ENCODE measurements at regions of chr7 and their contacts with region 1.

Region 1: DNA sequence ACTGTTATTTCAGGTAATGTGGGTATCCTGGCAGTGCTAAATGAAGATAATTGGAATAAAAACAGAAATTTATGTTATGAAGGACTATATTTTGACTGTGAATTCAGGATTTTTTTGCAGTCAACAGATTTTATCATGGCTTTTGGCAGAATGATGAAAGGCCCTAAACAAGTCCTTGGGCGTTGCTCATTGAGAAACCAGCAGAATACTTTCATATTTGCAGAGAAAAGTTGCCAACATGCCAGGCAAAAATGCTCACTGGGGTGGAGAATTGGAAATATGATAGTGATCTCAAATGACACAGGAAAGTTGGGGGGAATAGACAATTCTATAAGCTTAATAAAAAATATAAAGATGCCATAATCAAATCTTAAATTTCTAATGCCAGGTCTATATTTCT is 121.1 kb downstream of the GPR85 start:
- DNase-seq: no peak
- ATAC-seq: no peak
- H3K4me3 ChIP-seq: no peak overlapping the region
- H3K4me3 Mint-ChIP-seq: no peak overlapping the region
- H3K27ac ChIP-seq: no peak overlapping the region
- H3K27ac Mint-ChIP-seq: no peak overlapping the region
- H3K4me1 ChIP-seq: no peaks in the 10 kb centered on the region
- H3K4me1 Mint-ChIP-seq: no peaks in the 10 kb centered on the region
- H3K27me3 ChIP-seq: no peaks in the 10 kb centered on the region
- H3K27me3 Mint-ChIP-seq: peaks cover 2 to 46% (median 30%) of the 10 kb centered on the region in 5 donors

Region 2: GRCh38 chr7:112873831-112874553 is 91.5 kb before region 1 on chr7:
- CTCF ChIA-PET with region 1: no interaction called
- POLR2A ChIA-PET with region 1: no interaction called
- intact Hi-C with region 1: no loop called
- DNase-seq: no peak
- ATAC-seq: no peak
- H3K4me3 ChIP-seq: no peak overlapping the region
- H3K4me3 Mint-ChIP-seq: no peak overlapping the region
- H3K27ac ChIP-seq: no peak overlapping the region
- H3K27ac Mint-ChIP-seq: no peak overlapping the region
- H3K4me1 ChIP-seq: no peaks in the 10 kb centered on the region
- H3K4me1 Mint-ChIP-seq: peaks cover 0 to 58% (median 46%) of the 10 kb centered on the region in 7 donors
- H3K27me3 ChIP-seq: no peaks in the 10 kb centered on the region
- H3K27me3 Mint-ChIP-seq: no peaks in the 10 kb centered on the region

Region 3: DNA sequence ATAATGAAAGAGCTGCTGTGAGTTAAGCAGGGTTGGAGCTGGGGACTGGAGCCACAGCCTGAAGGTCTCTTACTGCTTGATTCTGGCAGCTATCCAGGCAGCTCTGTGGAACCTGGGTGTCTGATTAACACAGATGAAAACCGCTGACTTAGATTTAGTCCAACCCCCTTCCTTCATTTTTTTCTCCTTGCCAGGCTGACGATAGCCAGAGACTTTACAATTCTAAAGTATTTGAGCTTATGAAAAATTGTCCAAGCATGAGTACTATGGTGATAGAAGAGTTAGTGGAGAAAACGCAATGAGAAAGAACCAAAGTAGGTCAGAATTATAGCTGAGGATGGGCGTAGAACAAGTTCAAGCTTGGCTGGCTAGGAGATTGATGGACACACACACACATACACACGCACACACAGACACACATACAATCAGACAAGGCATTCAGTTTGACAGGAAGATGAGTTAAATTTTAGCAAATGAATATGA is 134.6 kb after region 1 on chr7:
- CTCF ChIA-PET with region 1: no interaction called
- POLR2A ChIA-PET with region 1: no interaction called
- intact Hi-C with region 1: no loop called
- DNase-seq: no peak
- ATAC-seq: no peak
- H3K4me3 ChIP-seq: no peak overlapping the region
- H3K4me3 Mint-ChIP-seq: no peak overlapping the region
- H3K27ac ChIP-seq: no peak overlapping the region
- H3K27ac Mint-ChIP-seq: no peak overlapping the region
- H3K4me1 ChIP-seq: no peaks in the 10 kb centered on the region
- H3K4me1 Mint-ChIP-seq: no peaks in the 10 kb centered on the region
- H3K27me3 ChIP-seq: no peaks in the 10 kb centered on the region
- H3K27me3 Mint-ChIP-seq: peaks cover 6 to 22% (median 15%) of the 10 kb centered on the region in 5 donors

Region 4: GRCh38 chr7:113142385-113143119 is 177.0 kb after region 1 on chr7:
- CTCF ChIA-PET with region 1: no interaction called
- POLR2A ChIA-PET with region 1: no interaction called
- intact Hi-C with region 1: loop called in 1 of 2 experiments (anchors 10 kb)
- DNase-seq: no peak
- ATAC-seq: no peak
- H3K4me3 ChIP-seq: no peak overlapping the region
- H3K4me3 Mint-ChIP-seq: no peak overlapping the region
- H3K27ac ChIP-seq: no peak overlapping the region
- H3K27ac Mint-ChIP-seq: no peak overlapping the region
- H3K4me1 ChIP-seq: no peaks in the 10 kb centered on the region
- H3K4me1 Mint-ChIP-seq: no peaks in the 10 kb centered on the region
- H3K27me3 ChIP-seq: no peaks in the 10 kb centered on the region
- H3K27me3 Mint-ChIP-seq: peaks cover 13 to 25% (median 14%) of the 10 kb centered on the region in 5 donors